PC-3 (cell line): ENCODE measurements at regions of chr1 and their contacts with region 1.

Region 1: GRCh38 chr1:206663832-206664652 is 20.7 kb upstream of the MAPKAPK2 start:
- DNase-seq: peak; percentile 89
- ATAC-seq: peak; percentile 83
- H3K4me3 ChIP-seq: no peak overlapping the region
- H3K27ac ChIP-seq: no peak overlapping the region
- H3K4me1 ChIP-seq: peaks cover 4% of the 10 kb centered on the region; the same call in 1 of the 2 replicates
- H3K27me3 ChIP-seq: peaks cover 16% of the 10 kb centered on the region; the same call in 1 of the 2 replicates
- CTCF ChIP-seq: peak; percentile 99

Region 2: DNA sequence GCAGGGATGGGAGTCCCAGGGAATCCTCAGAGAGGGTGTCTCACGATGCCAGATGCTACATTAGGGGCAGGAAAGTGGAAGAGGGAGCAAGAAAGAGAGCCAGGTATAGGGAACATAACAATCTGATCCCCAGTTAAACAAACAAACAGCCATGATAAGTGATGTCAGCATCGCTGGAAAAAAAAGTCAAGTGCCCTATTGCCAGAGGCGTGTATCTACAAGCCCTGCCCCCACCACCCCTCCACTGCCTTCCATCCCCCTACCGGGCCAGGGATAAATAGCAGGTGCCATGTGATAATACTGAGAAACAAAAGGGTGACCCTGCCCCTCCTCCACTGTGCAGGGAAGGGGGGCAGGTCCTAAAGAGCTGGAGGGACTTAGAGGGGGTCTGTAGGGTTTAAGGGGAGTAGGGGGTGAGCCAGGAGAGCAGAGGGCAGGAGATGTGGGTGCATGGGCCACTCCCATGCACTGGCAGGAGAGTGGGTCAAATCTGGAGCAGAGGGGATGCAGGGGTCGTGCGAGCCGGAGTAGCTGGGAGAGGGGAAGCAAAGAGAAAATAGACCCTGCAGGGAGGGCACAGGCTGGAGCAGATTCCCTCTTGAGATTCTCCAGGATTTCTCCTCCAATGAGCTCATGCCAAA is 724.2 kb before region 1 on chr1:
- CTCF ChIA-PET with region 1: no interaction called
- POLR2A ChIA-PET with region 1: no interaction called
- intact Hi-C with region 1: no loop called
- DNase-seq: peak; percentile 35
- ATAC-seq: no peak
- H3K4me3 ChIP-seq: no peak overlapping the region
- H3K27ac ChIP-seq: no peak overlapping the region
- H3K4me1 ChIP-seq: peaks cover 14% of the 10 kb centered on the region
- H3K27me3 ChIP-seq: peaks cover 38% of the 10 kb centered on the region
- CTCF ChIP-seq: peak; percentile 43; the same call in 1 of the 2 replicates

Region 3: DNA sequence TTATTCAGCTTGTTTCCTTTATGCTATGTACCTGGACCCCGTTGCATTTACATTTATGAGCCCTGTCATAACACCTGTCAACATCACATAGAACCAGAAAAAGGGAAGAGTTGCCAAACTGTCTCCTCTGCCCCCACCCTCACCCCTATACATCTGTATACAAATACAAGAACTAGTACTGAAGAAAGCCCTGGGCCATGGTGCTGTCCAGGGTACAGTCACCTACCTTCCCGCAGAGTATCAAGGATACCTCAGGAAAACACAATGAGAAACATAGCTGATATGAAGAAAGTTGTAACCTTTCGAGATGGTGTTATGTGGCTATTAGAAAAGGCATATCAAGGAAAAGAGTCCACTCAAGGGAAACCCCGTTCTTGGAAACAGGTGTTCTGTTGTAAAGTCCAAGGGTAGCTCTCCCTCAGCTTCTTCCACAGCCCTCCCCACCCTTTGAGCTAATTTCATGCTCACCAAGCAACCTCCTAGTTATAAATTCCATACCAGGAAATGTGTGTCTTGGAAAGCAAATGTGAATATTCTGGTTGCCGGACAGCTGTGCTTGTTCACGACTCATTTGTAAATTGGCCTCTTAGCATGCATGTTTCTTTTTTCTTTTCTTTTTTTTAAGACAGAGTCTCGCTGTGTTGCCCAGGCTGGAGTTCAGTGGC is 530.2 kb before region 1 on chr1:
- CTCF ChIA-PET with region 1: no interaction called
- POLR2A ChIA-PET with region 1: no interaction called
- intact Hi-C with region 1: no loop called
- DNase-seq: no peak
- ATAC-seq: no peak
- H3K4me3 ChIP-seq: no peak overlapping the region
- H3K27ac ChIP-seq: no peak overlapping the region
- H3K4me1 ChIP-seq: no peaks in the 10 kb centered on the region
- H3K27me3 ChIP-seq: peaks cover 25% of the 10 kb centered on the region
- CTCF ChIP-seq: no peak

Region 4: GRCh38 chr1:206507284-206508129 is 156.5 kb before region 1 on chr1 and contains the start of gene RASSF5:
- CTCF ChIA-PET with region 1: no interaction called
- POLR2A ChIA-PET with region 1: no interaction called
- intact Hi-C with region 1: loop called (anchors 5 kb)
- DNase-seq: peak; percentile 90
- ATAC-seq: peak; percentile 71
- H3K4me3 ChIP-seq: peak within 1 kb of the TSS; percentile 69
- H3K27ac ChIP-seq: no peak within 1 kb of the TSS
- H3K4me1 ChIP-seq: peaks cover 50% of the 10 kb centered on the region
- H3K27me3 ChIP-seq: no peaks in the 10 kb centered on the region
- CTCF ChIP-seq: no peak
- total RNA-seq, gene RASSF5: 15.5 and 16.0 TPM in 2 replicates

Region 5: DNA sequence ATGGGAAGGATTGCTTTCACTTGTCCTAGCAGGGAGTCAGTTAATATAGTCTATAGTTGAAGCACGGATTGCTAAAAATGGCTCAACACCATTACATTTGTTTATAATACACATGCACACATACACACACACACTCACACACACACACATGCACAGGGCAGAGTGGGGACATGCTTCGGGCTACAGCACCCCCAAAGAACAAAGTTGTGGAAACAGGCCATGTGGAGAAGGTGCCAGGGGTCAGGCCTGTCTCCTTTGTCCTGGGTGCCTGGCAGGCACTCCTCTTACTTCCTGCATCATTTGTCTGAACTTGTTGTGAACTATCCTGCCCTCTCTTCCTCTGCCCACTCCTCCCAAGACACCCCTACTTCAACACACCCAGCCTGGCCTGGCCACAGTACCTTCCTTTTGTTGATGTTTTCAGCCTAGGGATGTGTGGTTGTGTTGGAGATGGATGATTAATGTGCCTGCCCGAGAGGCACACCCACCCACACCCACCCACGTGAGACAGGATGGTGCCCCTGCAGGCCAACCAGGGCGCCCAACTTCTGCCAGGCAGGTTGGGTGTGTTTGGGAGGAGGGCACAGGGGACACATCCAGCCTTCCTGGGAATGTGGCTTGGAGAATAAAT is 139.2 kb before region 1 on chr1:
- CTCF ChIA-PET with region 1: no interaction called
- POLR2A ChIA-PET with region 1: no interaction called
- intact Hi-C with region 1: no loop called
- DNase-seq: peak; percentile 68
- ATAC-seq: peak; percentile 72
- H3K4me3 ChIP-seq: no peak overlapping the region
- H3K27ac ChIP-seq: no peak overlapping the region
- H3K4me1 ChIP-seq: peaks cover 19% of the 10 kb centered on the region
- H3K27me3 ChIP-seq: no peaks in the 10 kb centered on the region
- CTCF ChIP-seq: no peak

Region 6: GRCh38 chr1:206612129-206612876 is 51.7 kb before region 1 on chr1 and contains the start of gene EIF2D:
- CTCF ChIA-PET with region 1: interaction called, 23 read pairs
- POLR2A ChIA-PET with region 1: no interaction called
- intact Hi-C with region 1: loop called (anchors 1 kb)
- DNase-seq: peak; percentile 99
- ATAC-seq: peak; percentile 94
- H3K4me3 ChIP-seq: peak within 1 kb of the TSS; percentile 87
- H3K27ac ChIP-seq: peak within 1 kb of the TSS; percentile 53
- H3K4me1 ChIP-seq: peaks cover 7% of the 10 kb centered on the region
- H3K27me3 ChIP-seq: no peaks in the 10 kb centered on the region
- CTCF ChIP-seq: peak; percentile 98
- total RNA-seq, gene EIF2D: 107 and 110 TPM in 2 replicates

Region 7: GRCh38 chr1:206635080-206635977 is 28.7 kb before region 1 on chr1 and contains the start of gene DYRK3:
- CTCF ChIA-PET with region 1: interaction called, 83 read pairs
- POLR2A ChIA-PET with region 1: interaction called, 7 read pairs
- intact Hi-C with region 1: loop called (anchors 1 kb)
- DNase-seq: peak; percentile 98
- ATAC-seq: peak; percentile 82
- H3K4me3 ChIP-seq: peak within 1 kb of the TSS; percentile 85
- H3K27ac ChIP-seq: peak within 1 kb of the TSS; percentile 54
- H3K4me1 ChIP-seq: peaks cover 21% of the 10 kb centered on the region
- H3K27me3 ChIP-seq: no peaks in the 10 kb centered on the region
- CTCF ChIP-seq: no peak
- total RNA-seq, gene DYRK3: 12.1 and 14.1 TPM in 2 replicates

Region 8: DNA sequence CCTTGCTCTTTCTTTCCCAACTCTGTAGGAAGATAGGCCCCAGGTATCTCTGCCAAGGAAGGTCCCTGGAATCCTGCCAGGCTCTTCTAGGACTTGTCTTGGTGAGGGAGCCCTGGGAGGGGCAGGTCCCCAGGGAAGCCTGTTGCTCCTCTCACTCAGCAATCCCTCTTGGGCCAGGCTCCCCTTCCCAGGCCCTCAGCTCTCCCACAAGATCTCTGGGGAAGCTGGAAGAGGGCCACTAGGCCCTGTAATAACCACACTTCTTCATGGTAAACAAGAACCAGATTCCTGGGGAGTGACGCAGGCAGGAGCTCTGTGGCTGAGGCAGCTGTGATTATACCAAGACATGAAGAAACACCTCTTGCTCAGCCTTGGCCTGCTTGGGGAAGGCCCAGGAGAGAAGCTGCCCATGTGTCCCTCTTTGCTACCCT is 10.7 kb after region 1 on chr1:
- CTCF ChIA-PET with region 1: interaction called, 11 read pairs
- POLR2A ChIA-PET with region 1: no interaction called
- intact Hi-C with region 1: no loop called
- DNase-seq: peak; percentile 100
- ATAC-seq: peak; percentile 99
- H3K4me3 ChIP-seq: no peak overlapping the region
- H3K27ac ChIP-seq: peak overlapping the region; percentile 66
- H3K4me1 ChIP-seq: peaks cover 17% of the 10 kb centered on the region
- H3K27me3 ChIP-seq: no peaks in the 10 kb centered on the region
- CTCF ChIP-seq: no peak

Region 9: GRCh38 chr1:206708058-206708457 is 44.0 kb after region 1 on chr1:
- CTCF ChIA-PET with region 1: interaction called, 12 read pairs
- POLR2A ChIA-PET with region 1: no interaction called
- intact Hi-C with region 1: no loop called
- DNase-seq: no peak
- ATAC-seq: no peak
- H3K4me3 ChIP-seq: no peak overlapping the region
- H3K27ac ChIP-seq: no peak overlapping the region
- H3K4me1 ChIP-seq: peaks cover 34% of the 10 kb centered on the region
- H3K27me3 ChIP-seq: no peaks in the 10 kb centered on the region
- CTCF ChIP-seq: no peak

Region 10: DNA sequence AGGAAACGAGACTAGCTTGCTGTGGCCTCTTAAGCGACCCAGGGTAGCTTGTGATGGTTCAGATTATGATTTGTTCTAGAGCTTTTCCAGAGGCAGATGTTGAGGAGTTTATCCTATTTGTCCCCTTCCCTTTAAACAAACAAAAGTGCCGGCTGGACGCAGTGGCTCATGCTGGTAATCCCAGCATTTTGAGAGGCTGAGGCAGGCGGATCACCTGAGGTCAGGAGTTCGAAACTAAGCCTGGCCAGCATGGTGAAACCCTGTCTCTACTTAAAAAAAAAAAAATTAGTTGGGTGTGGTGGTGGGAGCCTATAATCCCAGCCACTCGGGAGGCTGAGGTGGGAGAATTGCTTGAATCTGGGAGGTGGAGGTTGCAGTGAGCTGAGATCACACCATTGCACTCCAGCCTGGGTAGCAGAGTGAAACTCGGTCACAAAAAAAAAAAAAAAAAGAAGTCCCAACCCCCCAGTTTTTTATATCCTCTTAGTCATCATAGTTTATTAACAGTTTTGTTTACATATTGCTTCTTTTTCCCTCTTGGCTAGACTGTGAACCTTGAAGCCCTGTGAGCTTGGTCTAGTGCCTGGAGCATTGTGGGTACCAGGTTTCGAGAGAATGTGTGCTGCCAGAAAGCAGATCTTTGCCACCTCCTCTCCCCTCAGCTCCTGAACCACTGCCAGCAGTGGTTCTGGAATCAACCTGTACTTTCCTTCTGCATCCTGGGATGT is 50.5 kb after region 1 on chr1:
- CTCF ChIA-PET with region 1: interaction called, 20 read pairs
- POLR2A ChIA-PET with region 1: no interaction called
- intact Hi-C with region 1: no loop called
- DNase-seq: peak; percentile 99
- ATAC-seq: peak; percentile 76
- H3K4me3 ChIP-seq: peak overlapping the region; percentile 45
- H3K27ac ChIP-seq: peak overlapping the region; percentile 88
- H3K4me1 ChIP-seq: peaks cover 64% of the 10 kb centered on the region
- H3K27me3 ChIP-seq: no peaks in the 10 kb centered on the region
- CTCF ChIP-seq: no peak